ENCODE measurements at regions of chr6 and their contacts with region 1.

Region 1: GRCh38 chr6:161618831-161619454 is 345.1 kb upstream of the AGPAT4 start:
- DNase-seq: peak; percentile 4
- H3K4me3 ChIP-seq: no peak overlapping the region; the same call in 1 of the 2 replicates
- CTCF ChIP-seq: peak; percentile 61

Region 2: GRCh38 chr6:161578478-161578877 is 40.5 kb before region 1 on chr6:
- CTCF ChIA-PET with region 1: no interaction called
- POLR2A ChIA-PET with region 1: no interaction called
- DNase-seq: no peak
- H3K4me3 ChIP-seq: no peak overlapping the region
- CTCF ChIP-seq: no peak

Region 3: DNA sequence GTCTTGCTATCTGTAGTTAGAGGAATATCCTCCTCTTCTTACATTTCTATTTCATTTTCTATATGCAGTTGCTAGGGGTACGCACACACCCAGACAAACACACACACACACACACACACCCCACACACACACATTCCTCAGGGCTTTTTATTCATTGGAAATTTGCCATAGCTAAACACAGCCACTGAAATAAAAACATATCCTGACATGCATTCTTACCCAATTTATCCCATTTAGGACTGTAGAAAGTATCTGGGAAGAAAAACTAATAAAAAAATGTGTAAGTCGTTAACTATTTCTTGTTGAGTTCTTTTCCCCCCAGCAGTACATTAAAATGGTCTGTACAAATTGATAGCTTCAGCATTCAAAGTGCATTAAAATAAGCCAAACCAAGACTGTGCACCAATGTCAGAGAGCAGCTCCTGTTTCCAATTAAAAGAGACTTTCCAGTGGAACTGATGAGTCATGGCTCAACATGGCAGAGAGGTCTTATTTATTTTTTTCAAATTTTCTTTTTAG is 12.8 kb after region 1 on chr6:
- CTCF ChIA-PET with region 1: interaction called, 17 read pairs
- POLR2A ChIA-PET with region 1: no interaction called
- DNase-seq: peak; percentile 73
- H3K4me3 ChIP-seq: no peak overlapping the region
- CTCF ChIP-seq: no peak

Region 4: DNA sequence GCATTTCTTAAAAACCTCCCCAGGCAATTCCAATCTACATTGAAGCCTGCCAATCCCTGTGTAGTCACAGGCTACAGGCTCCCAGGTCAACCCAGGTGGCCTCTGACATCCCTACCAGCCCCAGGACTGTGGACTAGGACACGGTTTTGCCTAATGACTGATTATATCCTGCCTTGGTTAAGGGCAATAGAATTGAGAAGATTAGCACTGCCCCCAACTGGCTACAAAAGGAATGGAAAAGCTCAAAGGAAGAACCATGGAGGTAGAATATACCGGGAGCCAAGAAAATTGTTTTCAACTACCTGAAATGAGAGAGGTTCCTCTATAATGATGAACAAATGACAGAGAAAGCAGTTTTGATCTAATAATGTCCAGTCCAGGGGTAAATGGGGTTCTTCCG is 76.1 kb after region 1 on chr6:
- CTCF ChIA-PET with region 1: interaction called, 43 read pairs
- POLR2A ChIA-PET with region 1: no interaction called
- DNase-seq: no peak
- H3K4me3 ChIP-seq: no peak overlapping the region
- CTCF ChIP-seq: peak; percentile 40

Measured in AG04449 (cell line).